ENCODE measurements at regions of chr11 and their contacts with region 1.

Region 1: GRCh38 chr11:96342961-96343711 is at the start of gene MAML2:
- DNase-seq: peak; percentile 87
- H3K4me3 Mint-ChIP-seq: peak within 1 kb of the TSS; percentile 95
- H3K27ac Mint-ChIP-seq: peak within 1 kb of the TSS; percentile 97
- H3K4me1 Mint-ChIP-seq: peaks cover 19% of the 10 kb centered on the region
- H3K27me3 Mint-ChIP-seq: no peaks in the 10 kb centered on the region
- CTCF ChIP-seq: peak; percentile 80
- total RNA-seq, gene MAML2: 16.7 and 22.7 TPM in 2 replicates

Region 2: GRCh38 chr11:95835768-95836488 is 507.2 kb before region 1 on chr11:
- CTCF ChIA-PET with region 1: interaction called, 8 read pairs
- intact Hi-C with region 1: loop called (anchors 2 kb)
- DNase-seq: peak; percentile 62
- H3K4me3 Mint-ChIP-seq: no peak overlapping the region
- H3K27ac Mint-ChIP-seq: peak overlapping the region; percentile 52
- H3K4me1 Mint-ChIP-seq: peaks cover 9% of the 10 kb centered on the region
- H3K27me3 Mint-ChIP-seq: no peaks in the 10 kb centered on the region
- CTCF ChIP-seq: peak; percentile 68

Region 3: DNA sequence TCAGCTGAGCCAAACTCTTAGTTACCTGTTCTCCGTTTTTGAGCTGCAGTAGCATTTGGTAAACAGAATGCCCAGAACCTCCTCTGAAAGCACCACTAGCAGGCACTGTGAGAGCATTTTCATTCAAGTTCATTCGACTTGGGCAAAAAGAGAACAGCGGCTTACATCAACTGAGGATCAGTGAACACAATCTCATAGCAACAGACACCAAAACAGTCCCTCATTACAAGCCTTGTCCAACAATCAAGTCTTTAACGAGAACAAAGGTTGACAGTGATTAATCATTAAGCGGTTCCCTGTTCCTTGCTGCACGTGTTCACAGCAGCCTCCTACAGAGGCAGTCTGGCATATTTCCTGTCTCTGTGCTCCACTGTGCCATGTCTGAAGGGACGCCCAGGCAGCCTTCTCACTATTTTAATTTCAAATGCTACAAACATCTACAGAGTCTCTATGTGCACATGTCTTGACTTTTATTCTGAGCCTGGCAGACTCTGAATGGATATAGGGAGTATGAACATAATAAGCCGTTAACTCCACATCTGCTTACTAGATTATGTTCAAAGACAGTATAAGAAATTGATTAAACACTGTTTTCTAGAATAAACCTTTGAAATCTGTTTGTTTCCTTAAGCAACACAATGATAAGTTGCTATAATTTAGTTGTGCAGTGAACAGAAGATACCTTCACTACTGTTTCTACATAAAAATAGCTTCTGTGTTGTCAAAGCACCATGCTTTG is 330.9 kb before region 1 on chr11:
- CTCF ChIA-PET with region 1: interaction called, 3 read pairs
- intact Hi-C with region 1: loop called (anchors 5 kb)
- DNase-seq: peak; percentile 60
- H3K4me3 Mint-ChIP-seq: no peak overlapping the region
- H3K27ac Mint-ChIP-seq: peak overlapping the region; percentile 75
- H3K4me1 Mint-ChIP-seq: peaks cover 38% of the 10 kb centered on the region
- H3K27me3 Mint-ChIP-seq: no peaks in the 10 kb centered on the region
- CTCF ChIP-seq: no peak

Region 4: GRCh38 chr11:96098514-96099241 is 244.5 kb before region 1 on chr11:
- CTCF ChIA-PET with region 1: no interaction called
- intact Hi-C with region 1: loop called (anchors 5 kb)
- DNase-seq: peak; percentile 46
- H3K4me3 Mint-ChIP-seq: peak overlapping the region; percentile 54
- H3K27ac Mint-ChIP-seq: peak overlapping the region; percentile 90
- H3K4me1 Mint-ChIP-seq: peaks cover 48% of the 10 kb centered on the region
- H3K27me3 Mint-ChIP-seq: no peaks in the 10 kb centered on the region
- CTCF ChIP-seq: no peak

Region 5: DNA sequence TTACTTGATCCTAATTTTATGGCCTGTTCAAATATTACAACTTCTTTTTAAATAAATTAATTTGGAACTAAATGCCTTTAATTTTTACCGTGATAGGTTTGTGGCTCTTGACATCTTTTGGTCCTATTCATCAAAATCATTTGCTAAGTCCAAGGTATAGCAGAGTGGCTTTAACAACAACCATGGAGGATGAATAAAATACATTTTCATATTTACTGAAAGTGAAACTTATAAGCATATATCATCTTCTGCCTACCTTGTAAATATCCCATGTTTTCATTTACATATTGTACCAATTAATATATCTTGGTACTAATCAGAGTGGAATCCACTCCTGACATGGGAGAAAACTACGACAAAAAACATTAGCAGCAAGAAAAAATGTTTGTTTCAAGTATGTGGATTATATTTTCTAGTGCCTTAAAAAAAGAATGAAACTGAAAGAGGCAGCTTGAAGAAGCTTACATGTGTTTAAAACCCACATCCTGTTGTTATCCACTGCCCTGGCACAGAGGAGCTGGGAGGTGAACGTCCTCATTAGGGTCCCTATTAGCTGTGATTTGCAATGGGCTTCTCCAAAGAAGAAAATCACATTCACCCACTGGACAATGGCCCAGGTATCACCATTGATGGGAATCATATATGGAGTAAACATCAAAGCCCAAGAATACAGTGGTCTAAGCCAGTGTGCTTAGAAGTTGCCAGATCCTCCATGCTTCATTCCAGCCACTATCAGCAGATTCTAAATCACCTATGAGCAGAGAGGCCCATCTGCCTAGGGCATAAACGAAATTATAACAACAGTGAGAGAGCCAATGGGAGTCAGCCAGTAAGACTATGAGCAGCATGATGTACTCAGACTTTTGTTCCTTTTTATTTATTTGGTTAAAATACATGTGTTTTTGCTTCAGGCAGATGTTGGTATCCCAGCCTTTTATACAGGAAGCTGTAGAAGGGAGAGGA is 84.9 kb before region 1 on chr11:
- CTCF ChIA-PET with region 1: interaction called, 9 read pairs
- intact Hi-C with region 1: loop called (anchors 5 kb)
- DNase-seq: no peak
- H3K4me3 Mint-ChIP-seq: no peak overlapping the region
- H3K27ac Mint-ChIP-seq: peak overlapping the region; percentile 64
- H3K4me1 Mint-ChIP-seq: peaks cover 57% of the 10 kb centered on the region
- H3K27me3 Mint-ChIP-seq: no peaks in the 10 kb centered on the region
- CTCF ChIP-seq: no peak

Region 6: GRCh38 chr11:96306933-96307775 is 36.0 kb before region 1 on chr11:
- CTCF ChIA-PET with region 1: interaction called, 18 read pairs
- intact Hi-C with region 1: loop called (anchors 2 kb)
- DNase-seq: peak; percentile 82
- H3K4me3 Mint-ChIP-seq: peak overlapping the region; percentile 60
- H3K27ac Mint-ChIP-seq: peak overlapping the region; percentile 98
- H3K4me1 Mint-ChIP-seq: peaks cover 61% of the 10 kb centered on the region
- H3K27me3 Mint-ChIP-seq: no peaks in the 10 kb centered on the region
- CTCF ChIP-seq: no peak